CD8-positive, alpha-beta T cell (primary cell): ENCODE measurements at regions of chr1 and their contacts with region 1.

Region 1: GRCh38 chr1:100132566-100133477 is at the starts of genes SASS6 and TRMT13:
- DNase-seq: peak; percentile 86 to 97 (median 93)
- ATAC-seq: peak; percentile 97
- H3K4me3 ChIP-seq: peak within 1 kb of the TSS; percentile 83
- H3K4me3 Mint-ChIP-seq: peak within 1 kb of the TSS; percentile 99
- H3K27ac ChIP-seq: peak within 1 kb of the TSS; percentile 71 to 72
- H3K27ac Mint-ChIP-seq: peak within 1 kb of the TSS; percentile 98
- H3K4me1 ChIP-seq: peaks cover 14% of the 10 kb centered on the region
- H3K4me1 Mint-ChIP-seq: peaks cover 44% of the 10 kb centered on the region
- H3K27me3 ChIP-seq: no peaks in the 10 kb centered on the region
- H3K27me3 Mint-ChIP-seq: no peaks in the 10 kb centered on the region
- CTCF ChIP-seq: no peak
- total RNA-seq, gene SASS6: 1.2 TPM
- total RNA-seq, gene TRMT13: 6.5 to 7.2 TPM

Region 2: DNA sequence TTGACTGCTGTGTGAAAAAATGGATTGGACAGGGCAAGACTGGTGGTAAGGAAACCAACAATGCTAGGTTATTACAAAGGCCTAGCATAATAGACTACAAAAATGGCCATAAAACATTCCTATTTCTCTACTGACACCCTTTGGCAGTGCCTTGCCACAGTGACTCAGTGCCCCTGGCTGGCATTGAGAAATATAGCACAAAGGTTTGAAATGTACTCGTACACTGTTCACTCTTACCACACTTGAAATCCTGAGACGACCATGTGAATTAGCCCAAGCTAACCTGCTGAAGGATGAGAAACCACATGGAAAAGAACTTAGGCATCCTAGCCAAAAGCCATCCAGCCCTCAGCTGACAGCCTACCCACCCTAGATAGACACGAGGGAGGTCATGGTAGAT is 636.8 kb before region 1 on chr1:
- CTCF ChIA-PET with region 1: no interaction called
- POLR2A ChIA-PET with region 1: no interaction called
- intact Hi-C with region 1: no loop called
- DNase-seq: no peak
- ATAC-seq: no peak
- H3K4me3 ChIP-seq: no peak overlapping the region
- H3K4me3 Mint-ChIP-seq: no peak overlapping the region
- H3K27ac ChIP-seq: no peak overlapping the region
- H3K27ac Mint-ChIP-seq: no peak overlapping the region
- H3K4me1 ChIP-seq: no peaks in the 10 kb centered on the region
- H3K4me1 Mint-ChIP-seq: no peaks in the 10 kb centered on the region
- H3K27me3 ChIP-seq: no peaks in the 10 kb centered on the region
- H3K27me3 Mint-ChIP-seq: peaks cover 3% of the 10 kb centered on the region
- CTCF ChIP-seq: no peak

Region 3: DNA sequence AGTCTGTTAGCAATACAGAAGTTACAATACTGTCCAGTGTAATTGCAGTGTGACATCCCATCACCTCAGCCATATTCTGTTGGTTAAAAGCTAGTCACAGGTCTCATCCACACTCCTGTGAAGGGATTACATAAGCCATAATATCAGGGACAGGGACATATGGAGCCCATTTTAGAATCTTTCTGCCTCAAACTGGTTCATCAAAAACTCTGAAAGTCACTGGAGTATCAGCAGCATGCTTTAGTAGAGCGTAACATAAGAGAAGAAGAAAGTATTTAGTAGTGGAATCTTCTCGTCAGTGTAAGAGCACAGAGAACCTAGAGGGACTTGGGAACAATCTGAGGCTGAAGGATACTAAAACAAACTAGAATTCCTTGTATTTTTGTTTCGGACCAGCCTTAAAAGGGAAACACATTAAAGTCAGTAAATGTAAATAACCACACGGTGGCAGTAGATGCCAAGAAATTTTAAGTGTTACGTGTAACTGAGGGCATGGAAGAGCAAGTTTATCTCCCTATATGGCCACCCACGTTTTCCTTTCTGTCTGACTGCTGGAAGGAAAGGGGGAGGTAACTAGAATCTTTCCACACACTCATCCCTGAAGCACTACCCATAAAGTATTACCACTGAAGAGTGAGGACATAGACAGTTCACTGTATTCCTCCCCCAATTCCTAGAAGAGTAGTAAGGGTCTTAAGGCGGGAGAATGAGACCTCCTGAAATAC is 324.3 kb before region 1 on chr1:
- CTCF ChIA-PET with region 1: interaction called, 4 read pairs
- POLR2A ChIA-PET with region 1: no interaction called
- intact Hi-C with region 1: loop called (anchors 5 kb)
- DNase-seq: peak in 4 of 9 experiments; percentile 15 to 81 (median 54)
- ATAC-seq: peak; percentile 79
- H3K4me3 ChIP-seq: no peak overlapping the region
- H3K4me3 Mint-ChIP-seq: no peak overlapping the region
- H3K27ac ChIP-seq: no peak overlapping the region
- H3K27ac Mint-ChIP-seq: no peak overlapping the region
- H3K4me1 ChIP-seq: no peaks in the 10 kb centered on the region
- H3K4me1 Mint-ChIP-seq: peaks cover 4% of the 10 kb centered on the region
- H3K27me3 ChIP-seq: peaks cover 0 to 2% of the 10 kb centered on the region in 2 experiments
- H3K27me3 Mint-ChIP-seq: peaks cover 3% of the 10 kb centered on the region
- CTCF ChIP-seq: peak; percentile 85

Region 4: GRCh38 chr1:99969729-99970621 is 162.8 kb before region 1 on chr1 and contains the start of gene SLC35A3:
- CTCF ChIA-PET with region 1: no interaction called
- POLR2A ChIA-PET with region 1: interaction called, 12 read pairs
- intact Hi-C with region 1: loop called (anchors 1 to 2 kb)
- DNase-seq: peak; percentile 56 to 88 (median 80)
- ATAC-seq: peak; percentile 82
- H3K4me3 ChIP-seq: peak within 1 kb of the TSS; percentile 76 to 89
- H3K4me3 Mint-ChIP-seq: peak within 1 kb of the TSS; percentile 99
- H3K27ac ChIP-seq: peak within 1 kb of the TSS; percentile 72 to 77
- H3K27ac Mint-ChIP-seq: peak within 1 kb of the TSS; percentile 95
- H3K4me1 ChIP-seq: peaks cover 14% of the 10 kb centered on the region
- H3K4me1 Mint-ChIP-seq: peaks cover 36% of the 10 kb centered on the region
- H3K27me3 ChIP-seq: no peaks in the 10 kb centered on the region
- H3K27me3 Mint-ChIP-seq: no peaks in the 10 kb centered on the region
- CTCF ChIP-seq: no peak
- total RNA-seq, gene SLC35A3: 30.2 to 35.4 TPM

Region 5: DNA sequence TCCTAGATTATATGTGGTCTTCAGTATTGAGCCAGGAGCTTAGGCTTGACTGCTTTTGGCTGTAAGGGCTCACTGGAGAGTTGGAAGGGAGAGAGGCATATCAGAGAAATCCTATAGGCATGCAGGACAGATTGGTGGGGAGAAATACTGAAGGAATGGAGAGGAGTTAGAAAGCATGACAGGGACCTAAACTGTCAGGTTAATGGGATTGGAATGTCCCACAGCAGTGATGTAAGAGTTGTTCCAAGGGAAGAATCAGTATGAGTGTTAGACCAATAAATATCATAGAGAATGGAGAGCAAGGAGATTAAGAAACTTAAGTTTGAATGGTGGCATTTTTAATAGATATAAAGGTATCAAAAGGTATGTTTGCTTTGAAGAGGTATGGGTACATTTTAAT is 123.4 kb before region 1 on chr1:
- CTCF ChIA-PET with region 1: no interaction called
- POLR2A ChIA-PET with region 1: no interaction called
- intact Hi-C with region 1: no loop called
- DNase-seq: no peak
- ATAC-seq: no peak
- H3K4me3 ChIP-seq: no peak overlapping the region
- H3K4me3 Mint-ChIP-seq: no peak overlapping the region
- H3K27ac ChIP-seq: no peak overlapping the region
- H3K27ac Mint-ChIP-seq: no peak overlapping the region
- H3K4me1 ChIP-seq: no peaks in the 10 kb centered on the region
- H3K4me1 Mint-ChIP-seq: no peaks in the 10 kb centered on the region
- H3K27me3 ChIP-seq: no peaks in the 10 kb centered on the region
- H3K27me3 Mint-ChIP-seq: no peaks in the 10 kb centered on the region
- CTCF ChIP-seq: no peak

Region 6: DNA sequence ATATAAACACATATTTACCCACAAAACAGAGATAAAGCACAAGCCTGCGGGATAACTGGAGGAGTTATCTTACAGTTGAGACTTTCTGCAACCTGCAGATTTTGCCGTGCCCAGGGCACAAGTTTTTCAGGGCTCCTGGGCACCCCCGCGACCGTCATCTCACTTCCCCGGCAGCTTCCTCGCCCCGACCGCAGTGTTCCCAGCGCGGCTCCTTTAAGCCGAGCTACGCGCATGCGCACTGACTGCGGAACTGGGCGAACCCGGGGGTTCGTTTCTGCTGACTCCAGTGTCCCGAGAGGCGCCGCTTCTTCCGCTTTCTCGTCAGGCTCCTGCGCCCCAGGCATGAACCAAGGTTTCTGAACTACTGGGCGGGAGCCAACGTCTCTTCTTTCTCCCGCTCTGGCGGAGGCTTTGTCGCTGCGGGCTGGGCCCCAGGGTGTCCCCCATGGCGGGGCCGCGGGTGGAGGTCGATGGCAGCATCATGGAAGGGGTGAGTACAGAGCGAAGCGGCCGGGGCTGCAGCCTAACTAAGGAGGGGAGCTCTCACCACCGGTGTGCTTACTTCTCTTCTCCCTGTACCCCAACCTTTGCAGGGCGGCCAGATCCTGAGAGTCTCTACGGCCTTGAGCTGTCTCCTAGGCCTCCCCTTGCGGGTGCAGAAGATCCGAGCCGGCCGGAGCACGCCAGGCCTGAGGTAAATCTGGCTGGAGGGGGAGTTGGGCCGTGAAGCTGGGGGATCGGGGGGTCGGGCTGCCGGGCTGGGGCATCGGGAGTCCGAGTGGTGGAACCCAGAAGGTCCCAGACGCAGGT is 133.3 kb after region 1 on chr1 and contains the start of gene RTCA:
- CTCF ChIA-PET with region 1: no interaction called
- POLR2A ChIA-PET with region 1: interaction called, 6 read pairs
- intact Hi-C with region 1: loop called (anchors 1 kb)
- DNase-seq: peak; percentile 85 to 98 (median 97)
- ATAC-seq: peak; percentile 94
- H3K4me3 ChIP-seq: peak within 1 kb of the TSS; percentile 80 to 94
- H3K4me3 Mint-ChIP-seq: peak within 1 kb of the TSS; percentile 100
- H3K27ac ChIP-seq: peak within 1 kb of the TSS; percentile 68 to 78
- H3K27ac Mint-ChIP-seq: peak within 1 kb of the TSS; percentile 98
- H3K4me1 ChIP-seq: peaks cover 29% of the 10 kb centered on the region
- H3K4me1 Mint-ChIP-seq: peaks cover 47% of the 10 kb centered on the region
- H3K27me3 ChIP-seq: no peaks in the 10 kb centered on the region
- H3K27me3 Mint-ChIP-seq: no peaks in the 10 kb centered on the region
- CTCF ChIP-seq: no peak
- total RNA-seq, gene RTCA: 36.2 to 37.7 TPM

Region 7: GRCh38 chr1:100895540-100896483 is 763.0 kb after region 1 on chr1 and contains the start of gene SLC30A7:
- CTCF ChIA-PET with region 1: no interaction called
- POLR2A ChIA-PET with region 1: no interaction called
- intact Hi-C with region 1: loop called (anchors 1 to 2 kb)
- DNase-seq: peak; percentile 91 to 98 (median 96)
- ATAC-seq: peak; percentile 72
- H3K4me3 ChIP-seq: peak within 1 kb of the TSS; percentile 92 to 98
- H3K4me3 Mint-ChIP-seq: peak within 1 kb of the TSS; percentile 100
- H3K27ac ChIP-seq: peak within 1 kb of the TSS; percentile 85 to 99
- H3K27ac Mint-ChIP-seq: peak within 1 kb of the TSS; percentile 100
- H3K4me1 ChIP-seq: peaks cover 20% of the 10 kb centered on the region
- H3K4me1 Mint-ChIP-seq: peaks cover 49% of the 10 kb centered on the region
- H3K27me3 ChIP-seq: no peaks in the 10 kb centered on the region
- H3K27me3 Mint-ChIP-seq: no peaks in the 10 kb centered on the region
- CTCF ChIP-seq: no peak
- total RNA-seq, gene SLC30A7: 18.8 to 20.2 TPM